Left cardiac atrium (tissue), 4 donors: ENCODE measurements at regions of chr1 and their contacts with region 1.

Region 1: GRCh38 chr1:167819849-167820683 is 93.9 kb downstream of the ADCY10 start:
- DNase-seq: peak; percentile 87
- ATAC-seq: peak; percentile 98

Region 2: DNA sequence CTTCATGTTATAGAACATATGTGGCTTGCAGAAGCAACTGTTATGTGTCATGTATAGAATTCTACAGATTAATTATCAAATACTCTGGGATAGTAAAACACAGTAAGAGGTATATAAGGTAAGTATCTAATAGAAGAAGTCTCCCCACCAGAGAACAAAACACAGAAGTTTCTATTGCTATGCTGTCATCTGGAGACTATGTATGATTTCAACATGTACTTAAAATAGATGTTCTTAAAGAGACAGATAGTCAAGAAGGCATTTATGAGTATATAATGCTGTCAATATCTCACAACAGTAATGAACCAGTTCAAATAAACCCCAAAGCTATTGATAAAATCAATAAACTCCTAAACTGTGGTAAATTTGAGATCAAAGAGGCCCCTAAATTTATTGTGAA is 102.0 kb after region 1 on chr1:
- intact Hi-C with region 1: loop called in 1 of 2 experiments (anchors 10 kb)
- DNase-seq: no peak
- ATAC-seq: peak in 1 of 2 donors; percentile 38

Region 3: DNA sequence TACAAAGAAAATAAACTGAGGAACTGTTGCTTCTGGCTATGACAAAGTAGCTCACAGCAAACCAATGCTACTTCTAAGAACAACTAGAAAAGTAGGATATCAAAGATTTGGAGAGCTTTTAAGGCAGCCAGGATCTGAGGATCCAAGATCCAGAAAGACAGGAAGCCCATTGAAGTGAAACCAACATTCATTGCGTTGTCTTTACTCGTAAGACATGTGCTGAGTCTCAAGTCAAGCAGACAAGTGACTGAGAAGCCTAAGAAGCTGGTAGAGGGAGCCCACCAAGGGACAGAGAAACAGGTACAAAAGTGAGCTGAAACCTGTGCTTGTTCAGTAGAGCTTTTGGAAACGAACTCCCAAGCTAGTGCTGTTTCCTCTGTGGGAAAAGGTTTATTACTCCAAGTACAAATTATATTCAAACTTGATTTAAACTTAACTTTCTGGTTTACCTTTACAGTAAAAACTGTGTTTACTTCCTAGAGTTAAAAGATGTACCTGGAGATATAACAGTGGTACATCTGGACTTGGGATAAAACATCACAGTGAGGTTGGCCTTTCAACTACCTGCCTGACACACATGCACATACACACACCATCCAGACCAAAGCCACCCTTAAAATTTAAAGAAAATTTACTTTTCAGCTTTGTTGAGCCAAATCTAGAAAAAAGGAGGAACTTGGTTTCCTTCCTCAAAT is 1506.3 kb after region 1 on chr1:
- intact Hi-C with region 1: no loop called
- DNase-seq: no peak
- ATAC-seq: no peak